Posterior vena cava (tissue), 2 donors: ENCODE measurements at regions of chr11 and their contacts with region 1.

Region 1: DNA sequence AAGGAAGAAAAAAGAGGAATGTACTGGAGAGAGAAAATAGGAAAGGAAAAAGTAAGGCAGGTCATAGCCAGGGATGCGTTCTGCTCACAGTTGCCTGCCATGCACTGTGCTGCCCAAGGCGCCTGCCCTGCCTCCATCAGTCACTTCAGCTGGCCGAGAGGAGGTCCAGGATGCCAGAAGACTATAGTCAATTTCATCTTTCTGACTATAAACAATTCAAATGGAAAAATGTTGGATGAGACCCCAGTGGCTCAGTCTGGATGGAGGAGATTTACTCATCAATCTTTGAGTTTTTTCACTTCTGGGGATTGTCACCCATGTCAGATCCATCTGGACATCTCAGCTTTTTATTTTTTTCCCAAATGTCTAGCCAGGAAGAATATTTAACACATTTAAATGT is 36.7 kb upstream of the CLMP start:
- DNase-seq: no peak

Region 2: DNA sequence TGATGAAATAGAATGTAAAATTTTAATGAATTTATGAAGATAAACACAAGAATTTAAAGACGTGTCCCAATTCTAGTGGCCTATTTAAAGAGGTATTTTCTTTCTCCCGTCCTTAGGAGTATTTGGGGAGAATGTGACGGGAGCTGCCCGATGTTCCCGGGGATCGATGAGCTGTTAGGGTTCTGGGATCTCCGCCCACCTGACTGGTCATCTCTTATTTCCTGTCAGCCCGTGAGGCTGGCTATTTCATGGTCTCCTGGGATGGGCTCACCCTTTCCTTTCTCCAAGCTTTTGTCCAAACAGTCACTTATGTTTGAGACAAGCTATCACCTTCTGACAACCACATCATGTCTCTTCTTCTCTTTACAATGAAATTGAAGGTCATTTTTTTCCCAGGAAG is 19.8 kb before region 1 on chr11:
- intact Hi-C with region 1: loop called in 1 of 2 experiments (anchors 1 kb)
- DNase-seq: no peak